PC-9 (cell line): ENCODE measurements at regions of chr1 and their contacts with region 1.

Region 1: DNA sequence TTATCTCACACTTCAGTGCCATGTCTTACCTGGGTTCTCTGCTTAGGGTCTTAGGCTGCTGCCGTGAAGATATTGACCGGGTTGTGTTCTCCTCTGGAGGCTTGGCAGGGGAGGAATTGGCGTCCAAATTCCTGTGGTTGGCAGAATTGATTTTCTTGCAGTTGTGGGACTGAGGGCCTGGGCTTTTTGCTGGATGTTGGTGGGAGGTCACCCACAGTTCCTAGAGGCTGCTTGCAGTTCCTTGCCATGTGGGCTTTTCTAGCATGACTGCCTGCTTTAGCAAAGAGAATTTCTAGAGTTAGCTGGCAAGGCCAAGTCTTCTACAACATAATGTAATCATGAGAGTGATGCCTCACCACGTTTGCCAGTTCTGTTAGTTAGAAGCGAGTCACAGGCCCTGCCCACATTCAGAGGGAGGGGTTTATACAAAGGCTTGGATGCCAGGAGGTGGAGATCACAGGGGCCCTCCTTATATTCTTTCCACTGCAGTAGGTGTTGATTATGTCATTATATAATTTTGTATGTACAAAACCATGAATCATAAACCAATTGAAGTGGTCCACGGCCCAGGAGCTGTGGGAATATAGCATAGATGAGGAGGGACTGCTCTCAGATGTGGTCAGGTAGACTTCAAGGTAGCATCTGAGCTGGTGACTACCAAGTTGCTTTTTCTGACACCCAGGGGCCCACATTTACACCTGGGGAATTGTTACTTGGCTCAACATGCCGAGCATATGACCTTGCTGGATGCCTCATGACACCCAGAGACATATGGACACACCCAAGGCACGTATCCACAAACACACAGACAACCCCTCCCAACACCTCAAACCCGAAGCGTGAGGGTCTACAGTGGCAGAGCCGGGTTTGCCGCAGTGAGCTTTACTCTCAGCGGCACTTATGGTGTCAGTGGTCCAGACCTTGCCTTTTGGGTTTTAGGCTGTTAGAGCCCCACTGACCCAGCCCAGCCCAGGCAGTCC is 6.7 kb downstream of the UBL4B start:
- DNase-seq: peak in 1 of 2 experiments; percentile 62
- H3K4me3 ChIP-seq: peak overlapping the region; percentile 36; the same call in 1 of the 2 replicates
- H3K27ac ChIP-seq: peak overlapping the region; percentile 20; the same call in 1 of the 2 replicates
- H3K4me1 ChIP-seq: peaks cover 60% of the 10 kb centered on the region
- H3K27me3 ChIP-seq: no peaks in the 10 kb centered on the region
- CTCF ChIP-seq: no peak

Region 2: GRCh38 chr1:110034451-110035235 is 84.3 kb before region 1 on chr1 and contains the start of gene STRIP1:
- CTCF ChIA-PET with region 1: no interaction called
- POLR2A ChIA-PET with region 1: no interaction called
- intact Hi-C with region 1: loop called (anchors 1 kb)
- DNase-seq: peak; percentile 88 to 94
- H3K4me3 ChIP-seq: peak within 1 kb of the TSS; percentile 89
- H3K27ac ChIP-seq: peak within 1 kb of the TSS; percentile 56
- H3K4me1 ChIP-seq: peaks cover 27% of the 10 kb centered on the region
- H3K27me3 ChIP-seq: no peaks in the 10 kb centered on the region
- CTCF ChIP-seq: no peak
- total RNA-seq, gene STRIP1: 32.1 and 36.5 TPM in 2 replicates